Dendritic cell treated with granulocyte-macrophage colony-stimulating factor and Interleukin-4, amounts not matched to agents 40 ng/mL and 50 ng/mL, for 4 days (primary cell): ENCODE measurements at regions of chr12 and their contacts with region 1.

Region 1: GRCh38 chr12:121697098-121697698 is 15.4 kb upstream of the TMEM120B start:
- H3K4me3 Mint-ChIP-seq: no peak overlapping the region
- H3K27ac Mint-ChIP-seq: no peak overlapping the region
- H3K4me1 Mint-ChIP-seq: no peaks in the 10 kb centered on the region
- H3K27me3 Mint-ChIP-seq: no peaks in the 10 kb centered on the region

Region 2: DNA sequence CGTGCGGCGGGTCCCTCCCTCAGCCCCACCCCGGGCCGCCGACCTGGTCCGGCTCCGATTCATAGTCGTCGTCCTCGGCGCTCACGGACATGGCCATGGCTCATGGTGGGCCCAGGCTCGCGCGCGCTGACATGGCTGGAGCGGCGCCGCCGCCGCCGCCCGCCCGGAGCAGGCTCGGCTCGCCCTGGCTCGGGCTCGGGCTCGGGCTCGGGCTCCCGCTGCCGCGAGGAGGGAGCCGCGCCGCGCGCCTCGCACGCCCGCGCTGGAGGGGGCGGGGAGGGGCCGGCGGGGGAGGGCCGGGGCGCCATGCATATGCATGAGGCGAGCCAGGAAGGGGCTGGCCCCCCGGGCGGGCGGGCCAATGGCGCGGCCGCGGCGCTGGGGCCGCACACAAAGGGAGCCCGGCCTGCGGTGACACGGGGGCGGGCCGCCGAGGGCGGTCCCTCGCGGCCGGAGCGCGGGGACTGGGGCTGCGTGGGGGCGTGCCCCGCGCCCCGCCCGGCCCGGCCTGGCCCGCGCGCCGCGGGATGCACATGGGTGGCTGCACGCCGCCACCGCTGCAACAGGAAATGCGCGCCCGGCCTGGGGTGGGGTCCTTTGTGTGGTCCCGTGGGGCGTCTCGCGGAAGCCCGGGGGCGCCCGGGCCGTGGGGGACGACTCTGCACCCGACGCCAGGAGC is 229.9 kb before region 1 on chr12:
- intact Hi-C with region 1: no loop called
- H3K4me3 Mint-ChIP-seq: peak overlapping the region; percentile 63
- H3K27ac Mint-ChIP-seq: no peak overlapping the region
- H3K4me1 Mint-ChIP-seq: peaks cover 69% of the 10 kb centered on the region
- H3K27me3 Mint-ChIP-seq: no peaks in the 10 kb centered on the region

Region 3: GRCh38 chr12:121649819-121650353 is 47.3 kb before region 1 on chr12:
- intact Hi-C with region 1: no loop called
- H3K4me3 Mint-ChIP-seq: no peak overlapping the region
- H3K27ac Mint-ChIP-seq: no peak overlapping the region
- H3K4me1 Mint-ChIP-seq: peaks cover 42% of the 10 kb centered on the region
- H3K27me3 Mint-ChIP-seq: no peaks in the 10 kb centered on the region

Region 4: DNA sequence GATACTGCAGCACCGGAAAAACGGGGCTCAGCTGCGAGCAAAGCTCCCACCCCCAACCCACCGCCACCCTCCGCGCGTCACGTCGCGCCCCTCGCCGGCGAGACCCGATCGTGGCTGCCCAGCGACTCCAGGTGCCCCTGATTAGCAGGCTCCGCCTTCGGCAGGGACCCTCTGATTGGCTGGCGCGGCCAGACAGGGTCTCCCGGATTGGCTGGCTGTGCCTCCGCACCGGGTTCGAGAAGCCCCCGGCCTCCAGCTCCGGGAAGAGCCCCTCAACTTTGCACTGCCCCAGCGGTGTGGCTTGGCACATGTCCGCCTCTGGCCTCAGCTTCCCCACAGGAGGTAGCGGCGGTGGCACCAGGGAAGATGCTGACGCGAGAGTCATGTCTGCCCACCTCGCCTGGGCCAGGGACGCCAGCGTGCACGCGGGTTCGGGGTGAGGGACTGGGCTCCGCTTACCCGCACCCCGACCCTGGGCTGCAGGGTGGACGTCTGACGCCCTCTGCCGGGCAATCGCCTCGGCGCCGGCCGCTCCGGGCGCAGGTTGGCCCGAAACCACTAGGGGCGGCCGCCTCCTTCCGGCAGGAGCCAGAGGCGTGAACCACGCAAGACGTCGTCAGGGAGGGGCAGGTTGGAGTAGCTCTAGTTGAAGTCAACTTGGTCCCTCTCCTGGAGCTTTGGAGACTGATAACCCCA is 96.8 kb after region 1 on chr12:
- intact Hi-C with region 1: loop called (anchors 5 kb)
- H3K4me3 Mint-ChIP-seq: peak overlapping the region; percentile 78
- H3K27ac Mint-ChIP-seq: peak overlapping the region; percentile 89
- H3K4me1 Mint-ChIP-seq: peaks cover 84% of the 10 kb centered on the region
- H3K27me3 Mint-ChIP-seq: no peaks in the 10 kb centered on the region

Region 5: DNA sequence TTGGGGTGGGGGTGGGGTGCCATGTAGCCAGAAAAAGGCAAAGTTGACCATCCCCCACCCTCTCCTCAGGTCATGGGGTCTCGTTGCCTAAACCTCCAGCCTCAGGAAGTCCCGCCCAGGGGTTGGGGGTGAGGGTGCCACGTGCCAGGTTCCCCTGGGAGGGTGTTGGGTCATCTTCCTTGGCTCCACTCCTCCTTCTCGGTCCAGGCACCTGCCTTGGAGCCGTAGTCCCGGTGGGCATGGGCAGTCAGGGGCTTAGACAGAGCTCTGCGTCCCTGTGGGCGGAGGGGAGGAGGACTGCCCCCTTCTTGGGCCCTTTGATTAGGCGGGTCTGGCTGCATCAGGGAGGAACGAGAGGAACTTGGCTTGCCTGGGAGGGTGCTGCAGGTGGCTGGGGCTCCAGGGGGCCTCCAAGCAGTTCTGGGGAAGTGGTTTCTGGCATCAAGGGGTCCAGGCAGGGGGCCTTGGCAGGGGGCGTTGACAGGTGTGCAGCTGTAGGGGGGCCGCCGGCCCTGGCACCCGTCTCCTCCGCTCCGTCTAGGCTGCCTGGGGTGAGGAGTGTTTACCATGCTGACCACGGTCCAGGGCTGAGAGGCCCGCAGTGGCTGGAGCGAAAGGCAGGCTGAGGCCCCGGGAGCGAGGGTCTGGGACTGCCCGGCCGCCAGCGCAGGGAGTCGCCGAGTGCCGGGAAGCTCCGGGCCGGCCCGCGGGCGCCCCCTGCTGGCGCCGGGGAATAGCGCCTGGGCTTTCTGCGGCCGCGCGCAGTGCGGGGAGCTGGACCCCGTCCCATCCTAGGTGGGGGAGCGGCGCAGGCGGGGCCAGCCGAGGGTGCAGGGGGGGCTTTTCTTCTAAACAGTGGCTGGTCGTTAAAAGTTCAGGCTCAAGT is 114.5 kb after region 1 on chr12:
- intact Hi-C with region 1: loop called (anchors 1 kb)
- H3K4me3 Mint-ChIP-seq: peak overlapping the region; percentile 82
- H3K27ac Mint-ChIP-seq: peak overlapping the region; percentile 76
- H3K4me1 Mint-ChIP-seq: peaks cover 69% of the 10 kb centered on the region
- H3K27me3 Mint-ChIP-seq: no peaks in the 10 kb centered on the region